ENCODE measurements at regions of chr14 and their contacts with region 1.

Region 1: DNA sequence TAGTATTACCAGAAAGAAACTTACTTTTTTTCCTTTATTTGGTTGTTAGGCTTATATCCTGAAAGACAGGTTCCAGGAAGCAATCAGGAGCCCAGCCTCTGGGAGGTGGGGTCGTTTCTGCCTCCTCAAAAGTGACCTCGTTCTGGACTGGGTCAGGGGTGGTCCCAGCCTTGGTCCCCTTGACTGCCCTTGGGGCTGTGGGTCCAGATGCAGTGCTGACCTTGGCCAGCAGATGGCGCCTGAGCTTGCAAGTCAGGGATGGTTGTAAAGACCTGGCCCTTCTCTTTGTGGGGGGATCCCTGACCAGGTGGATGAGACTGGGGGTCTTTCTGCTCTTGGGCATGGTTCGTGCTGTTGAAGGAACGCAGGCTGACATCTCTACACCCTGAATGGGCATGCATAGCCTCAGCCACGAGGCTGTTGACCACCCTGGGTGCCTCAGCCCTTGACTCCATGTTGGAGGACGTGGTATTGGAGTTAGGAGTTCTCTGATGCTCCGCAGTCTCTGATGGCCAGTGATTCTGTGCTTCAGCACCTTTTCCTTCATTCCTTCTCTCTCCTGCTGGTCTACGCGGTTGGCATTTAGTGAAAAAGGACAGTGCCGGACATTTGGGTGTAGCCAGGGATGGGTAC is 62.4 kb downstream of the ADCK1 start:
- DNase-seq: no peak
- H3K4me3 ChIP-seq: no peak overlapping the region
- CTCF ChIP-seq: peak; percentile 98

Region 2: GRCh38 chr14:77872983-77873382 is 10.7 kb after region 1 on chr14:
- CTCF ChIA-PET with region 1: interaction called, 24 read pairs
- POLR2A ChIA-PET with region 1: no interaction called
- DNase-seq: no peak
- H3K4me3 ChIP-seq: no peak overlapping the region
- CTCF ChIP-seq: no peak

Region 3: DNA sequence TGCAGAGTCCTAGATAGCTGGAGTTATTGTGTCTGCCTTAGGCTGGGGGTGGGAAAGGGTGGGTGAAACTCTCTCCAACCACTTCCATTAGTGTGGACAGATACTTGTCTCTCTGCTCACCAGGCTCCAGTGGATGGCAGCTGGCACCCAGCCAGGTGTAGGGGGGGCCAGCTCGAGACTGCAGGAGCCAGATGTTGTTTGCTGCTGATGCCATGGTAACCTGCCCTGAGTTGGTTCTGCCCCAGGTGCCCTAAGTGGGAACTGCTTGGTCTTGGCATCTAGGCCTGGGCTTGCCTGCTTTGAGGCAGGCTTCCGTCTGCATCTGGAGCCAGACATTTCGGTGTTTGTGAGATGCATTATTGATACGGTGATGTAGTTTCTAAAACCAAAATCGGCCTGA is 19.8 kb after region 1 on chr14:
- CTCF ChIA-PET with region 1: interaction called, 21 read pairs
- POLR2A ChIA-PET with region 1: no interaction called
- DNase-seq: no peak
- H3K4me3 ChIP-seq: no peak overlapping the region
- CTCF ChIP-seq: no peak

Region 4: GRCh38 chr14:78074561-78074960 is 212.3 kb after region 1 on chr14:
- CTCF ChIA-PET with region 1: no interaction called
- POLR2A ChIA-PET with region 1: no interaction called
- DNase-seq: no peak
- H3K4me3 ChIP-seq: no peak overlapping the region
- CTCF ChIP-seq: no peak

Measured in AG04449 (cell line).